GM12878 (cell line): ENCODE measurements at regions of chr7 and their contacts with region 1.

Region 1: DNA sequence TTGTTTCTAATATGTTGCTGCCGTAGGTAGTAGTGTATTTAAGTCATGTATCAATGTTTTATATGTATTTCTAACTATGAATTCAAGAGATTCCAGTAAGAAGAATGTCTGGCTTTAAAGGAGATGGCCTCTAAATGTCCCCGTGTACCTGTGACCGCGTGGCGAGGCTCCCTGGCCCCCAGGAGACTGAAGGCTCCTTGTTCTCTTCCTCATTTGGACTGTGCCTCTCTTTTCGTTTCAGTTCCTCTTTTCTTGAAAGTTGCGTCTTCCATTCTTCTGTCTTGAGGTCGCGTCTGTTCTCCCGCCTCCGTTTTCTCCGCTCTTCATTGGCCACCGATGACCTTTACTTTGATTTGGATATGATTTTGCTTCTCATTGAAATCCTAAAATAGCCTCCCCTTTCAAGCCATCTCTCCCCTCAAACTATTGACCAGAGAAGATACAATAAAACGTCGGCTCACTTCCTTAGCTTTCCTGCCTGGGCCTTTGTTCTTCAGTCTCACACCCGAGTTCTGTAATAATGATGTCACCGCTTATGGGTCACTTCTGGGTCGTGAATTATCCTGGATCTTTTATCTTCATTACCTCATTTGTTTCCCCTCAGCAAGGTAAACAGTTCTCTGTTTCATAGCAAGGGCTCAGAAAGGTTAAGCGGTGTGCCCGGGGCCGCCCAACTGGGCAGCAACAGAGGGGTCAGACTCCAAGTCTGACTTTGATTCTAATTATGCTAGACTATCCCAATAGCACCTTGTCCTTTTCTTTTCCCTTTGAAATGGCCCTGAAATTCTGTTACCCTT is 28.7 kb downstream of the WIPI2 start:
- DNase-seq: peak; percentile 97
- ATAC-seq: peak; percentile 88
- H3K4me3 ChIP-seq: peak overlapping the region; percentile 40
- H3K27ac ChIP-seq: peak overlapping the region; percentile 96
- H3K4me1 ChIP-seq: peaks cover 28% of the 10 kb centered on the region
- H3K27me3 ChIP-seq: no peaks in the 10 kb centered on the region
- CTCF ChIP-seq: no peak
- EP300 ChIP-seq: peak; percentile 82 to 86; a peak in 3 of 4 replicates
- POLR2A ChIP-seq: peak; percentile 85
- RAD21 ChIP-seq: no peak

Region 2: DNA sequence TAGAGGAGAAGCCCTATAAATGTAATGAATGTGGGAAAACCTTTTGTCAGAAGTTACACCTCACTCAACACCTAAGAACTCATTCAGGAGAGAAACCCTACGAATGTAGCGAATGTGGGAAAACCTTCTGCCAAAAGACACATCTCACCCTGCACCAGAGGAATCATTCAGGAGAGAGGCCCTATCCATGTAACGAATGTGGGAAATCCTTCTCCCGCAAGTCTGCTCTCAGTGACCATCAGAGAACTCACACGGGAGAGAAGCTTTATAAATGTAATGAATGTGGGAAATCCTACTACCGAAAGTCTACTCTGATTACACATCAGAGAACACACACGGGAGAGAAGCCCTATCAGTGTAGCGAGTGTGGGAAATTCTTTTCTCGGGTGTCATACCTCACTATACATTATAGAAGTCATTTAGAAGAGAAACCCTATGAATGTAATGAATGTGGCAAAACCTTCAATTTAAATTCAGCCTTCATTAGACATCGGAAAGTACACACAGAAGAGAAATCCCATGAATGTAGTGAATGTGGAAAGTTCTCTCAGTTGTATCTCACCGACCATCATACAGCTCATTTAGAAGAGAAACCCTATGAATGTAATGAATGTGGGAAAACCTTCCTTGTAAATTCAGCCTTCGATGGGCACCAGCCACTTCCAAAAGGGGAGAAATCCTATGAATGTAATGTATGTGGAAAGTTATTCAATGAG is 154.2 kb before region 1 on chr7:
- CTCF ChIA-PET with region 1: no interaction called
- POLR2A ChIA-PET with region 1: no interaction called
- RAD21 ChIA-PET with region 1: no interaction called
- SMC1A ChIA-PET with region 1: no interaction called
- in situ Hi-C with region 1: no loop called
- intact Hi-C with region 1: no loop called
- DNase-seq: no peak
- ATAC-seq: no peak
- H3K4me3 ChIP-seq: no peak overlapping the region
- H3K27ac ChIP-seq: no peak overlapping the region
- H3K4me1 ChIP-seq: no peaks in the 10 kb centered on the region
- H3K27me3 ChIP-seq: no peaks in the 10 kb centered on the region
- CTCF ChIP-seq: no peak
- EP300 ChIP-seq: no peak
- POLR2A ChIP-seq: no peak
- RAD21 ChIP-seq: no peak

Region 3: GRCh38 chr7:5193880-5194279 is 24.9 kb before region 1 on chr7:
- CTCF ChIA-PET with region 1: no interaction called
- POLR2A ChIA-PET with region 1: interaction called, 15 read pairs
- RAD21 ChIA-PET with region 1: no interaction called
- SMC1A ChIA-PET with region 1: interaction called, 5 read pairs
- in situ Hi-C with region 1: no loop called
- intact Hi-C with region 1: loop called (anchors 2 kb)
- DNase-seq: no peak
- ATAC-seq: no peak
- H3K4me3 ChIP-seq: peak overlapping the region; percentile 16; the same call in 1 of the 2 replicates
- H3K27ac ChIP-seq: no peak overlapping the region
- H3K4me1 ChIP-seq: no peaks in the 10 kb centered on the region; the same call in 1 of the 2 replicates
- H3K27me3 ChIP-seq: no peaks in the 10 kb centered on the region
- CTCF ChIP-seq: no peak
- EP300 ChIP-seq: no peak
- POLR2A ChIP-seq: no peak
- RAD21 ChIP-seq: no peak

Region 4: DNA sequence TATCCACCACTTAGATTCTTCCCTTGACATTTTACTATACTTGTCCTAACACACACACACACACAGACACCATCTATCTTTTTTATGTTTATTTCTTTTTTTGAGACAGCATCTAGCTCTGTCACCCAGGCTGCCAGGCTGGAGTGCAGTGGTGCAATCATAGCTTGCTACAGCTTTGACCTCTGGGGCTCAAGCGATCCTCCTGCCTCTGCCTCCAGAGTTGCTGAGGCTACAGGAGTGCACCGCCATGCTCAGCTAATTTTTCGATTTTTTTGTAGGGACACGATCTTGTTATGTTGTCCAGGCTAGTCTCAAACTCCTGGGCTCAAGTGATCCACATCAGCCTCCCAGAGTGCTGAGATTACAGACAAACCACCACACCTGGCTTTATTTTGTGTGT is 12.1 kb before region 1 on chr7:
- CTCF ChIA-PET with region 1: interaction called, 5 read pairs
- POLR2A ChIA-PET with region 1: interaction called, 14 read pairs
- RAD21 ChIA-PET with region 1: interaction called, 6 read pairs
- SMC1A ChIA-PET with region 1: interaction called, 31 read pairs
- in situ Hi-C with region 1: no loop called
- intact Hi-C with region 1: no loop called
- DNase-seq: no peak
- ATAC-seq: peak; percentile 15; the same call in 1 of the 3 replicates
- H3K4me3 ChIP-seq: no peak overlapping the region
- H3K27ac ChIP-seq: no peak overlapping the region; the same call in 1 of the 2 replicates
- H3K4me1 ChIP-seq: no peaks in the 10 kb centered on the region
- H3K27me3 ChIP-seq: no peaks in the 10 kb centered on the region
- CTCF ChIP-seq: no peak
- EP300 ChIP-seq: no peak
- POLR2A ChIP-seq: no peak
- RAD21 ChIP-seq: no peak

Region 5: GRCh38 chr7:5248201-5248885 is 29.6 kb after region 1 on chr7:
- CTCF ChIA-PET with region 1: no interaction called
- POLR2A ChIA-PET with region 1: no interaction called
- RAD21 ChIA-PET with region 1: no interaction called
- SMC1A ChIA-PET with region 1: no interaction called
- in situ Hi-C with region 1: no loop called
- intact Hi-C with region 1: no loop called
- DNase-seq: no peak
- ATAC-seq: no peak
- H3K4me3 ChIP-seq: no peak overlapping the region
- H3K27ac ChIP-seq: no peak overlapping the region
- H3K4me1 ChIP-seq: no peaks in the 10 kb centered on the region
- H3K27me3 ChIP-seq: no peaks in the 10 kb centered on the region
- CTCF ChIP-seq: no peak
- EP300 ChIP-seq: no peak
- POLR2A ChIP-seq: no peak
- RAD21 ChIP-seq: no peak

Region 6: GRCh38 chr7:5333121-5334045 is 114.6 kb after region 1 on chr7:
- CTCF ChIA-PET with region 1: no interaction called
- POLR2A ChIA-PET with region 1: no interaction called
- RAD21 ChIA-PET with region 1: no interaction called
- SMC1A ChIA-PET with region 1: no interaction called
- in situ Hi-C with region 1: no loop called
- intact Hi-C with region 1: loop called (anchors 1 kb)
- DNase-seq: no peak
- ATAC-seq: peak; percentile 57
- H3K4me3 ChIP-seq: no peak overlapping the region
- H3K27ac ChIP-seq: no peak overlapping the region
- H3K4me1 ChIP-seq: peaks cover 23% of the 10 kb centered on the region
- H3K27me3 ChIP-seq: no peaks in the 10 kb centered on the region
- CTCF ChIP-seq: no peak
- EP300 ChIP-seq: no peak
- POLR2A ChIP-seq: no peak
- RAD21 ChIP-seq: no peak